Activated CD4-positive, alpha-beta T cell treated with anti-CD3 and anti-CD28 coated beads for 36 hours (primary cell): ENCODE measurements at regions of chr2 and their contacts with region 1.

Region 1: GRCh38 chr2:30239308-30239985 is 8.1 kb downstream of the LBH start:
- DNase-seq: peak; percentile 85
- ATAC-seq: peak; percentile 34
- H3K4me3 Mint-ChIP-seq: peak overlapping the region; percentile 76
- H3K27ac Mint-ChIP-seq: peak overlapping the region; percentile 93
- H3K4me1 Mint-ChIP-seq: peaks cover 93% of the 10 kb centered on the region
- H3K27me3 Mint-ChIP-seq: no peaks in the 10 kb centered on the region

Region 2: DNA sequence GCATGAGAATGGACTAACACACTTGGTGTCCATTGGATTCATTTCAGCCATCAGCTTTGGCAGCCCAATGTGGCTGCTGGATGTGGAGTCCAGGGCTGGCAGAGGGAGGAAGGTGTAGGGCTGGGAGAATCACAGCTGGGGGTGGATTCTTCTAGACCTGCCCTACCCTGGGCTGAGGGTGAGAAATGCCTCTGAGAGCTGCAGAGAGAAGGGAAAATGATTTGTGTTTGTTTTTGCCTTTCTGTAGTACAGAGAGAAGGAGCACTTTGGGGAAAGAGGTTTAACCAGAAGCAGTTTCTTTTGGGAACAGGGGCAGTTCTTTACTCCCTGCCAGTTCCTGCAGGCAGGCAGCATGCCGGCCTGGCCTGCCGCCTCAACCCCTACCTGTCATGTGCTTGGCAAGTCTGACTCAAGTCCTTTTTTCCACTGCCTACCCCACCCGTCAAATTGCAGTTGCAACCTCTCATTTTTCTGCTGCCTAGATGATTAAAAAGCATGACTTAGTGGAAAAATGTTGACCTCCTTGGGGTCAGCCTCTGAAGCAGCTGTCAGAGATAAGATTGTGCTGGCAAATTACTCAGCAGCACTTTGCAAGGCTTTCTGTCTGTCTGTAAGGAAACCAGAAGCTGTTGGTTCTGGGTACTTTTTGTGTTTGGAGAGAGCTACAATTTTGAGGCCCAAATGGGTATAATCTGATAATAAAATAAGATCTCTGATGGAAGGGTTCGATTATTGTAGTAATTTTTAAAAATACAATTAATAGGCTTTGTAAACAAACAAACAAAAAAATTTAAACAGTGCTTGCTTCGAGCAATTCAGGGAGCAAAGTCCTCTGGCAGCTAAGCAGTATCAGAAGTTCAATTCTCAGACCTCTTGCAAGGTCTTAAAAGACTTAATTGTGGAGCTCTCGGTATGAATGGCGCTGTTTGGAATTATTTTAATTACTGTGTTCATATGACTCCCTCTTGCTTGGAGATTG is 13.6 kb after region 1 on chr2:
- CTCF ChIA-PET with region 1: interaction called, 72 read pairs
- POLR2A ChIA-PET with region 1: interaction called, 6 read pairs
- intact Hi-C with region 1: loop called (anchors 1 to 2 kb)
- DNase-seq: peak; percentile 87
- ATAC-seq: peak; percentile 77
- H3K4me3 Mint-ChIP-seq: peak overlapping the region; percentile 42
- H3K27ac Mint-ChIP-seq: peak overlapping the region; percentile 88
- H3K4me1 Mint-ChIP-seq: peaks cover 96% of the 10 kb centered on the region
- H3K27me3 Mint-ChIP-seq: no peaks in the 10 kb centered on the region

Region 3: GRCh38 chr2:30287857-30288513 is 48.5 kb after region 1 on chr2:
- CTCF ChIA-PET with region 1: interaction called, 14 read pairs
- POLR2A ChIA-PET with region 1: no interaction called
- intact Hi-C with region 1: loop called in 1 of 2 experiments (anchors 1 kb)
- DNase-seq: no peak
- ATAC-seq: peak; percentile 60
- H3K4me3 Mint-ChIP-seq: no peak overlapping the region
- H3K27ac Mint-ChIP-seq: peak overlapping the region; percentile 49
- H3K4me1 Mint-ChIP-seq: peaks cover 24% of the 10 kb centered on the region
- H3K27me3 Mint-ChIP-seq: no peaks in the 10 kb centered on the region

Region 4: GRCh38 chr2:30447149-30448045 is 207.9 kb after region 1 on chr2 and contains the start of gene LCLAT1:
- CTCF ChIA-PET with region 1: interaction called, 3 read pairs
- POLR2A ChIA-PET with region 1: interaction called, 4 read pairs
- intact Hi-C with region 1: loop called in 1 of 2 experiments (anchors 2 kb)
- DNase-seq: peak; percentile 91
- ATAC-seq: peak; percentile 80
- H3K4me3 Mint-ChIP-seq: peak within 1 kb of the TSS; percentile 87
- H3K27ac Mint-ChIP-seq: peak within 1 kb of the TSS; percentile 96
- H3K4me1 Mint-ChIP-seq: peaks cover 32% of the 10 kb centered on the region
- H3K27me3 Mint-ChIP-seq: no peaks in the 10 kb centered on the region
- total RNA-seq, gene LCLAT1: 18.5 to 21.7 TPM